ENCODE measurements at regions of chr1 and their contacts with region 1.

Region 1: GRCh38 chr1:40849801-40850592 is 12.2 kb downstream of the CITED4 start:
- DNase-seq: peak; percentile 79

Region 2: DNA sequence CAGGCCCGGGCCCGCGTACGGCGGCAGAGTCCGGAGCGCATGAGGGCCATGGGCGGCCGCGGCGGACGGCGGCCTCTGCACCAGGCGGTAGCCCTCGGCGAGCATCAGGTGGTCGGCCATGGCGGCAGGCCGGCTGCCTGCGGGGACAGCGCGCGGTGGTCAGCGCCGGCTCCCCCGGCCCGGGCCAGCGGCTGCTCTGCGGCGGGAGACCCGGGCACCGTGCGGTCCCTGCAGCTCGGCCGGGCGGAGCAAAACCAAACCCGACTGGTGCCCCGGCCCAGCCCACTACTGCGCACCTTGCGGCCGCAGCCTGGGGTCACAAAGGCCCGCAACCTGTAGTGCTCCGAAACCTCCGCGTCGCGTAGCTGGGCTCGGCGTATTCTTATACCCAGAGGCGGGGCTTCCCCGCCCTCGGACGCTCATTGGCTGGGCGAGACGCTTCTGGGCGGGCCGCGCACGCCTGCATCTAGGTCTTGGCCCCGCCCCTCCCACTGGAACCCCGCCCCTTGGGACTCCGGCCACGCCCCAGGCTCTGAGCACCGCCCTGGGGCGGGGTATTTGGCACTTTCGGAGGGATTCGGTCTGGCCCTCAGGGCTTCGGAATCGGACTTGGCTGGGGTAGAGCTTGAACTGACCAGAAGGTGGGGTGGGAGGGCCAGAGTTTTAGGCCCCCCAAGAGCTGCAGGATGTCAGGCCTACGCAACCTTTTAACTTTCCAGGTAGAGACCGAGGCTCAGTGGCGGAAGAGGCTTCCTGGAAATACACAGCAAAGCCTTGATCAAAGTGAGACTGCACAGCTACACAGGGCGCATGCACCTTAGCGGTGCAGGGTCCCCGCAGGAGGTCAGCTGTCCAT is 12.2 kb after region 1 on chr1 and contains the start of gene CITED4:
- CTCF ChIA-PET with region 1: interaction called, 4 read pairs
- POLR2A ChIA-PET with region 1: interaction called, 13 read pairs
- DNase-seq: peak; percentile 93